ENCODE measurements at regions of chr17 and their contacts with region 1.

Region 1: GRCh38 chr17:64439956-64440355 is 9.0 kb upstream of the MILR1 start:
- DNase-seq: no peak
- ATAC-seq: no peak

Region 2: DNA sequence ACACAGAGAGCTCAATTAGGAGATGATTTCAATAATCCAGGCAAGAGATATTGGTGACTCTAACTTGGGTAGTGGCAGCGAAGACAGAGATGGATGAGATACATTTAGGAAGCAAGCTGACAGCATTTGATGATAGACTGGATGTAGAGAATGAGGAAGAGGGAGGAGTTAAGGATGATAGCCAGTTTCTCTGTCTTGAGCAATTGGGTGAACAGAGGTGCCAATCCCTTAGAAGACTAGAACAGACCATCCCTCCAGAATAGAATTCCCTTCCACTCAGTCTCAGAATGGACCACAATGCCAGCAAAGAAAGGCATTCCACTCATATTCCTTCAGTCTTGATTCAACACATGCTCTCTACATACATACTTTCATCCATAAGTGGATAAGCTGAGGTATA is 39.7 kb after region 1 on chr17:
- intact Hi-C with region 1: loop called (anchors 10 kb)
- DNase-seq: no peak
- ATAC-seq: no peak